ENCODE measurements at regions of chr16 and their contacts with region 1.

Region 1: GRCh38 chr16:3165111-3165822 is 22.7 kb upstream of the OR1F1 start:
- DNase-seq: no peak
- ATAC-seq: no peak
- H3K4me3 ChIP-seq: peak overlapping the region; percentile 29 to 61 (median 36)
- H3K27ac ChIP-seq: no peak overlapping the region
- H3K4me1 ChIP-seq: peaks cover 1 to 6% of the 10 kb centered on the region in 2 donors
- H3K27me3 ChIP-seq: peaks cover 41 to 50% (median 41%) of the 10 kb centered on the region in 3 donors
- CTCF ChIP-seq: no peak
- POLR2A ChIP-seq: no peak

Region 2: GRCh38 chr16:2980227-2981086 is 184.8 kb before region 1 on chr16 and contains the start of gene PKMYT1:
- in situ Hi-C with region 1: no loop called
- intact Hi-C with region 1: no loop called
- DNase-seq: peak; percentile 69 to 82
- ATAC-seq: peak; percentile 90 to 94
- H3K4me3 ChIP-seq: peak within 1 kb of the TSS; percentile 70 to 87 (median 82)
- H3K27ac ChIP-seq: peak within 1 kb of the TSS; percentile 76 to 89 (median 84)
- H3K4me1 ChIP-seq: peaks cover 15 to 19% of the 10 kb centered on the region in 2 donors
- H3K27me3 ChIP-seq: peaks cover 0 to 6% (median 3%) of the 10 kb centered on the region in 3 donors
- CTCF ChIP-seq: no peak
- POLR2A ChIP-seq: peak; percentile 73 to 88
- total RNA-seq, gene PKMYT1: 1.4 to 2.4 TPM in 2 of 4 donors, not detected in the others

Region 3: GRCh38 chr16:3059000-3059722 is 106.1 kb before region 1 on chr16:
- in situ Hi-C with region 1: loop called in 3 of 4 experiments (anchors 5 to 10 kb)
- intact Hi-C with region 1: loop called (anchors 1 kb)
- DNase-seq: peak; percentile 67 to 82
- ATAC-seq: peak; percentile 83 to 89
- H3K4me3 ChIP-seq: peak overlapping the region; percentile 79 to 98 (median 92)
- H3K27ac ChIP-seq: peak overlapping the region; percentile 79 to 85 (median 83)
- H3K4me1 ChIP-seq: peaks cover 28 to 39% of the 10 kb centered on the region in 2 donors
- H3K27me3 ChIP-seq: no peaks in the 10 kb centered on the region
- CTCF ChIP-seq: peak; percentile 81 to 99 (median 99)
- POLR2A ChIP-seq: peak in 1 of 2 donors; percentile 17

Region 4: GRCh38 chr16:3129137-3130131 is 35.8 kb before region 1 on chr16:
- in situ Hi-C with region 1: no loop called
- intact Hi-C with region 1: loop called (anchors 1 kb)
- DNase-seq: peak; percentile 60 to 79
- ATAC-seq: peak; percentile 87 to 89
- H3K4me3 ChIP-seq: peak overlapping the region; percentile 44 to 53 (median 47)
- H3K27ac ChIP-seq: peak overlapping the region; percentile 54 to 74 (median 69)
- H3K4me1 ChIP-seq: peaks cover 32 to 46% of the 10 kb centered on the region in 2 donors
- H3K27me3 ChIP-seq: no peaks in the 10 kb centered on the region
- CTCF ChIP-seq: peak; percentile 85 to 96 (median 88)
- POLR2A ChIP-seq: no peak

Region 5: GRCh38 chr16:3150346-3151218 is 14.7 kb before region 1 on chr16:
- in situ Hi-C with region 1: no loop called
- intact Hi-C with region 1: loop called (anchors 1 kb)
- DNase-seq: peak; percentile 77 to 88
- ATAC-seq: peak; percentile 83 to 86
- H3K4me3 ChIP-seq: peak overlapping the region; percentile 67 to 87 (median 67)
- H3K27ac ChIP-seq: peak overlapping the region; percentile 68 to 78 (median 72)
- H3K4me1 ChIP-seq: peaks cover 13% of the 10 kb centered on the region in 2 donors
- H3K27me3 ChIP-seq: peaks cover 9 to 22% (median 11%) of the 10 kb centered on the region in 3 donors
- CTCF ChIP-seq: no peak
- POLR2A ChIP-seq: no peak

Region 6: DNA sequence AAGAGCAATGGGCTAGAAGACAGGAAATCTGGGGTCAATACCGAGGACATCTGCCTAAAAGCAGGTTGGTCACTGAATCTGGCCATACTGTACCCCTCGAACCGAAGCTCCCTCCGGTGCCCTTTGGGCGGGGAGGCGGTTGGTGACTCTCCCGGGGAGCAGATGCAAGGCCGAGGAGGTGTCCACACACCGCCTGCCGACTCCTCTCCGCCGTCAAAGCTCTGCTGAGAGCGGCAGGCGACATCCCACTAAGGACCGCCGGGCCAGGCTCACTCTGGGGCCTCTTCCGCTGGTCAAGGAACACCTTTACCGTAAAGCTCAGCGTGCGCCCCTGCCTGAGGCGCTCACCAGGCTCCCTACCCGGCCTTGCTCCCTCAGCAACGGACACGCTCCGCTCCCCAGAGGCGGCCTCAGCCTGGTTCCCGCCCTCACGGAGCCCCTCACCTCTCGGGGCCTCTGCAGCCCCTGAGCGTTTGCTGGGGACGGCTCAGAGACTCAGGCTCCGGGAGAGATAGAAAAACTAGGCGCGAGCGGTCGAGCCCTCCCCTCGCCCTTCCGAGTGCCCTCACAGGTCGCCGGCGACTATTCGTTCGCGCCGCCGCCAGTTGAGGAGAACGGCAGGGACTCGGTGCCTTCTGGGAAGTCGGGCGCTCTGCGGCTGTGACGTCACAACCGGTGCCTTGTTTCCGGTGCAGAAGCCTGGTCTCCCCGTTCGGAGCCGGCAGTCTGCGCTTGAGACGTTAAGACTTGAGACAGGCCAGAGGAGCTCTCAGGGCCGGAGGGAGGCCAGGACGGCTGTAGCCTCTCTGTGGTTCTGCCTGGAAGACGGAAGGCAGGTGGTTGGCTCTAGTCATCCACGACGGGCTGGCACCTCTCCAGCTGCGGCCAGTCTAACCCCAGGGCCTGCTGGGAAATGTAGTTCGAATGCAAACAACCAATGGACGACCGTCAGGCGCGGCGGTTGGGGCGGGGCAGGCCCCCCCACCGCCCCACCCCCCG is 69.6 kb after region 1 on chr16 and contains the start of gene ZNF200:
- in situ Hi-C with region 1: no loop called
- intact Hi-C with region 1: no loop called
- DNase-seq: peak; percentile 93 to 94
- ATAC-seq: peak; percentile 99 to 100
- H3K4me3 ChIP-seq: peak within 1 kb of the TSS; percentile 87 to 100 (median 99)
- H3K27ac ChIP-seq: peak within 1 kb of the TSS; percentile 96 to 100 (median 98)
- H3K4me1 ChIP-seq: peaks cover 12% of the 10 kb centered on the region in 2 donors
- H3K27me3 ChIP-seq: no peaks in the 10 kb centered on the region
- CTCF ChIP-seq: no peak
- POLR2A ChIP-seq: peak; percentile 60 to 72
- total RNA-seq, gene ZNF200: 0.49 to 3.2 (median 2.2) TPM